Activated naive CD4-positive, alpha-beta T cell treated with anti-CD3 and anti-CD28 coated beads for 36 hours (primary cell): ENCODE measurements at regions of chr10 and their contacts with region 1.

Region 1: GRCh38 chr10:102225646-102226541 is at the start of gene ELOVL3:
- DNase-seq: peak; percentile 87
- H3K4me3 Mint-ChIP-seq: peak within 1 kb of the TSS; percentile 48
- H3K27ac Mint-ChIP-seq: no peak within 1 kb of the TSS
- H3K4me1 Mint-ChIP-seq: peaks cover 11% of the 10 kb centered on the region
- H3K27me3 Mint-ChIP-seq: peaks cover 33% of the 10 kb centered on the region
- total RNA-seq, gene ELOVL3: not detected

Region 2: GRCh38 chr10:102200751-102201640 is 24.9 kb before region 1 on chr10:
- CTCF ChIA-PET with region 1: interaction called, 12 read pairs
- intact Hi-C with region 1: no loop called
- DNase-seq: no peak
- H3K4me3 Mint-ChIP-seq: no peak overlapping the region
- H3K27ac Mint-ChIP-seq: no peak overlapping the region
- H3K4me1 Mint-ChIP-seq: peaks cover 8% of the 10 kb centered on the region
- H3K27me3 Mint-ChIP-seq: peaks cover 2% of the 10 kb centered on the region

Region 3: DNA sequence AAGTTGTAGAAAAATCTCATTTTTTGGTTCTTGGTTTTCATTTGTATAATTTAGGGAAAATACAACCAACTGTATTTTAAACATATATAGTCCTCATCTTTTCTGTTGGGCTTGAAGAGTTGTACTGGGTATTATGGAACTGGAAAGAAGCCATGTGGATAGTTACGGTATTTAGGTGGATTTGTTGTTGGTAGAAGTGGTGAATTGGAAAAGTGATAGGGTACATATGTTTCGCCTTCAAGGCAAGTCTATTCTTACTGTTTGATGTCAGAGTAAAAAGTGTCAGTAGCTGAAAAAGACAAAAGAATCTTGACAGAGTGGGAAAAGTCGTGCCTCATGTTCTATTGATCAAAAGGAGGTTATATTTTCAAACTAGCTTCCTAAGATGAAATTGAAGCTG is 84.0 kb after region 1 on chr10:
- CTCF ChIA-PET with region 1: interaction called, 10 read pairs
- intact Hi-C with region 1: no loop called
- DNase-seq: no peak
- H3K4me3 Mint-ChIP-seq: no peak overlapping the region
- H3K27ac Mint-ChIP-seq: no peak overlapping the region
- H3K4me1 Mint-ChIP-seq: peaks cover 38% of the 10 kb centered on the region
- H3K27me3 Mint-ChIP-seq: no peaks in the 10 kb centered on the region

Region 4: DNA sequence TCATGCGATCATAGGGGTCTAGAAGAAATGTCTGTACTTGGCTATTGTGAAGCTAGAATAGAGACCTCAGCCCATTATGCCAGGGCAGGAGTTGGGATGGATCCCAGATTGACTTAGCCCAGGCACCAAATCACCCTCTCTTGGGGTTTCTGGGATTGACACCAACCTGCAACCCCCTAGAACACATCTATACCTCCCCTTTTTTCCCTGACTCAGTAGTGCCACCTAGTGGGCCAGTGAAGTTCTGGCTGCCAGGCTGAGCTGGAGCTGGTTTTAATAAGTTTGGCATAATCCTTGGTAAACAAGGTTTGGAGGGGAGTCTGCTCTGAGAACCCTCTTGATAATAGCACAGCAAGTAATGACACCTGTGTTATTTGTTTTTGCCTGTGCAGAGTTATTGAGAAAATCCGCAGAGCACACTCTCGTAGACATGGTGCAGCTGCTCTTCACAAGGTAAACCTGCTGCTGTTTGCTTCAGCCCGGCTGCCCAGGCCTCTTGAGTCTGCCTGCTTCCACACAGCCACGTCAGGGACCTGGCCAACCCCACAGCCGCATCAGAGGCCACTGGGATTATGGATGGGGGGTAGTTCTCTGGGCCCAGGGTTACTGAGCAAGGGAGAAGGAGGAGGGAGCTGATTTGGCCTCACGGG is 126.3 kb after region 1 on chr10:
- CTCF ChIA-PET with region 1: interaction called, 685 read pairs
- intact Hi-C with region 1: loop called (anchors 1 kb)
- DNase-seq: peak; percentile 87
- H3K4me3 Mint-ChIP-seq: no peak overlapping the region
- H3K27ac Mint-ChIP-seq: no peak overlapping the region
- H3K4me1 Mint-ChIP-seq: no peaks in the 10 kb centered on the region
- H3K27me3 Mint-ChIP-seq: no peaks in the 10 kb centered on the region

Region 5: DNA sequence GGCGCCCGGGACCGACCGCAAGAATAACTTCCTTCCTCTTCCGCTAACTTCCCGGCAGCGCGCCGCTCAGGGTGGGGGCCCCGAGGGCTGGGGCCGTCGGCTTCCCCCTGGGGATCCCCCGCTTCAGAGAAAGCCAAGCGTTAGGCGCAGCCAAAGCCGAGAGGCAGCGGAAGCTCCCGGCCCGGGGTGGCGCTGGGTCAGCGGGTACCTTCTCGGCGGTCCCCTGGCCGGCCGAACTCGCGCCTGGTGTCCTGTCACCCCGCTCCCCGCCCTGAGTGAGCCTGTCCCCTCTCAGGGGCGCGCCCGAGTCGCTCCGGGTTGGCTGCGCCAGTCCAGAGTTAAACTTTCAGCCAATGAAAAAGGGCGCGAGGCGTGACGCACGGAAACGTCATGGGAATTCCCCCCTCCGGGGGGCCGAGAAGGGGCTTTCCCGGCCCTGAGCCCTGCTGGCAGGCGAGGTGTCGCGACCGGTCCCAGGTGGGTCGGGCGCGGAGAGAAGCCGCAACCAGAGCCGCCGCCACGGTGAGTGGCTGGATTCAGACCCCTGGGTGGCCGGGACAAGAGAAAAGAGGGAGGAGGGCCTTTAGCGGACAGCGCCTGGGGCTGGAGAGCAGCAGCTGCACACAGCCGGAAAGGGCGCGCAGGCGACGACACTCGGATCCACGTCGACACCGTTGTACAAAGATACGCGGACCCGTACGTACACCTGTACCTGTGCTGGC is 168.3 kb after region 1 on chr10:
- CTCF ChIA-PET with region 1: interaction called, 44 read pairs
- intact Hi-C with region 1: loop called (anchors 1 kb)
- DNase-seq: peak; percentile 99
- H3K4me3 Mint-ChIP-seq: peak overlapping the region; percentile 87
- H3K27ac Mint-ChIP-seq: peak overlapping the region; percentile 99
- H3K4me1 Mint-ChIP-seq: peaks cover 44% of the 10 kb centered on the region
- H3K27me3 Mint-ChIP-seq: no peaks in the 10 kb centered on the region

Region 6: GRCh38 chr10:102450194-102450938 is 224.5 kb after region 1 on chr10:
- CTCF ChIA-PET with region 1: interaction called, 11 read pairs
- intact Hi-C with region 1: no loop called
- DNase-seq: peak; percentile 82
- H3K4me3 Mint-ChIP-seq: peak overlapping the region; percentile 96
- H3K27ac Mint-ChIP-seq: peak overlapping the region; percentile 96
- H3K4me1 Mint-ChIP-seq: peaks cover 27% of the 10 kb centered on the region
- H3K27me3 Mint-ChIP-seq: no peaks in the 10 kb centered on the region

Region 7: DNA sequence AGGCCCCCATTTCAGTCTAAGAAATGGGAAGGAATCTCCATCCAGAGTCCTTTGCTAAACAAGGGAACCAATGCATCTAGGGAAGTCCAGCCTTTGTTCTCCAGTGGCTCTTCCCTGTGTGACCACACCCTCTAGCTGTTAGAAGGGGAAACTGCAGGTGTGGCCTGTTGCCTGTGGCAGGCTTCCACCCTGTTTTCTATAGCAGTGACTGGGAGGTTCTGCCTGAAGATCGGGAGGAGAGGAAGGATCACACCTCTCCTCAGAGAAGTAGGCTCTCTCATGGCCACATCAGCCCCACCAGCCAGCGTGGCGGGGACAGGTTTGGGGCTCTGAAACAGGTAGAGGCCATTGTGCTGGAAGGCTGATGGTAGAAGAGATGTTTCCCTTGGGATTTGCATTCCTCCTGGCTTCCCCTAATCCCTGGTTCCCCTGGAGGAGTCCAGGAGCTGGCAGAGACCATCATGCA is 370.6 kb after region 1 on chr10:
- CTCF ChIA-PET with region 1: interaction called, 4 read pairs
- intact Hi-C with region 1: loop called (anchors 1 kb)
- DNase-seq: peak; percentile 58
- H3K4me3 Mint-ChIP-seq: no peak overlapping the region
- H3K27ac Mint-ChIP-seq: no peak overlapping the region
- H3K4me1 Mint-ChIP-seq: no peaks in the 10 kb centered on the region
- H3K27me3 Mint-ChIP-seq: no peaks in the 10 kb centered on the region